GM12878 (cell line): ENCODE measurements at regions of chr1 and their contacts with region 1.

Region 1: GRCh38 chr1:169694304-169695075 is 16.9 kb downstream of the SELL start:
- DNase-seq: no peak
- ATAC-seq: peak; percentile 51
- H3K4me3 ChIP-seq: no peak overlapping the region
- H3K27ac ChIP-seq: peak overlapping the region; percentile 67; the same call in 1 of the 2 replicates
- H3K4me1 ChIP-seq: peaks cover 80% of the 10 kb centered on the region
- H3K27me3 ChIP-seq: no peaks in the 10 kb centered on the region
- CTCF ChIP-seq: peak in 2 of 3 experiments; percentile 10 to 26; a peak in 2 of 6 replicates
- EP300 ChIP-seq: no peak
- POLR2A ChIP-seq: no peak
- RAD21 ChIP-seq: peak; percentile 42; the same call in 1 of the 2 replicates

Region 2: GRCh38 chr1:169586395-169587255 is 107.9 kb before region 1 on chr1 and contains the start of gene F5:
- CTCF ChIA-PET with region 1: interaction called, 5 read pairs
- POLR2A ChIA-PET with region 1: no interaction called
- RAD21 ChIA-PET with region 1: interaction called, 18 read pairs
- SMC1A ChIA-PET with region 1: interaction called, 10 read pairs
- in situ Hi-C with region 1: no loop called
- intact Hi-C with region 1: no loop called
- DNase-seq: no peak
- ATAC-seq: peak; percentile 99
- H3K4me3 ChIP-seq: 0 out of 2 replicates have a peak within 1 kb of the TSS, but pooled peaks have one; percentile 15
- H3K27ac ChIP-seq: no peak within 1 kb of the TSS
- H3K4me1 ChIP-seq: peaks cover 5% of the 10 kb centered on the region; the same call in 1 of the 2 replicates
- H3K27me3 ChIP-seq: no peaks in the 10 kb centered on the region; a peak in 1 of 4 replicates
- CTCF ChIP-seq: peak; percentile 71 to 87 (median 77)
- EP300 ChIP-seq: no peak
- POLR2A ChIP-seq: no peak
- RAD21 ChIP-seq: peak; percentile 52
- polyA plus RNA-seq, gene F5: 0.29 to 0.46 TPM

Region 3: GRCh38 chr1:169595764-169596711 is 98.5 kb before region 1 on chr1:
- CTCF ChIA-PET with region 1: interaction called, 51 read pairs
- POLR2A ChIA-PET with region 1: no interaction called
- RAD21 ChIA-PET with region 1: interaction called, 29 read pairs
- SMC1A ChIA-PET with region 1: interaction called, 102 read pairs
- in situ Hi-C with region 1: no loop called
- intact Hi-C with region 1: no loop called
- DNase-seq: no peak
- ATAC-seq: peak; percentile 79
- H3K4me3 ChIP-seq: no peak overlapping the region
- H3K27ac ChIP-seq: no peak overlapping the region
- H3K4me1 ChIP-seq: peaks cover 12% of the 10 kb centered on the region
- H3K27me3 ChIP-seq: no peaks in the 10 kb centered on the region
- CTCF ChIP-seq: no peak
- EP300 ChIP-seq: no peak
- POLR2A ChIP-seq: no peak
- RAD21 ChIP-seq: no peak

Region 4: GRCh38 chr1:169630006-169630405 is 64.5 kb before region 1 on chr1 and contains the start of gene SELP:
- CTCF ChIA-PET with region 1: no interaction called
- POLR2A ChIA-PET with region 1: no interaction called
- RAD21 ChIA-PET with region 1: no interaction called
- SMC1A ChIA-PET with region 1: no interaction called
- in situ Hi-C with region 1: no loop called
- intact Hi-C with region 1: no loop called
- DNase-seq: no peak
- ATAC-seq: no peak
- H3K4me3 ChIP-seq: no peak within 1 kb of the TSS
- H3K27ac ChIP-seq: no peak within 1 kb of the TSS
- H3K4me1 ChIP-seq: no peaks in the 10 kb centered on the region
- H3K27me3 ChIP-seq: no peaks in the 10 kb centered on the region
- CTCF ChIP-seq: no peak
- EP300 ChIP-seq: no peak
- POLR2A ChIP-seq: no peak
- RAD21 ChIP-seq: no peak
- polyA plus RNA-seq, gene SELP: not detected

Region 5: DNA sequence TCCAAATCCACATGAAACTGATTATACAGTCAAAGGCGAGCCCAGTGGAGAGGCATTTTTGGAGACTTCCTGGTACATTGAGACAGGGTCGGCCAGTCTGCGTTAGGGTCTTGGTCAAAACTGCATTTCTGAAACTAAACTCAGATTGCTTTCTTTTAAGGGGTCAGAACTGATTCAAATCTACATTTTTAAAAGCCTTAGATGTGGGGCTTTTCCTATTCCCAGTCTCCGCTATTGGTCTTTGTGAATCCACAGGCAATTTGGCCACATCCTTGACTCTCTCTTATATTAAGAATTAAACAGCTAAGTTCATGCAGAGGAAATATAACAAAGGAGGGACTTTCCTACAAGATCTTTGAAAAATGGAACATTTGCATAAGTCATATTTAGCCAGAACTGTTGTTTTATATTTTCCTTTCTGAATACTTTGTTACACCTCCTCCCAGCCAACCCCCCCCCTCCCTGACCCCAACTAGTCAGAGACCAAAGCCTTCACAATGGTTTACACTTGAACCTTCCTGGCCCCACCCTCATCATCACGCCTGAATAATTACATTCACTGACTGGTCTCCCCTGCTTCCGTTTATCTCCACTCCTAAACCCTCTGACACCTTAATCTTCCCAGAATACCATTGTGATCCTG is 14.0 kb before region 1 on chr1:
- CTCF ChIA-PET with region 1: interaction called, 125 read pairs
- POLR2A ChIA-PET with region 1: interaction called, 64 read pairs
- RAD21 ChIA-PET with region 1: interaction called, 71 read pairs
- SMC1A ChIA-PET with region 1: interaction called, 176 read pairs
- in situ Hi-C with region 1: no loop called
- intact Hi-C with region 1: loop called (anchors 2 kb)
- DNase-seq: peak; percentile 73
- ATAC-seq: peak; percentile 88
- H3K4me3 ChIP-seq: peak overlapping the region; percentile 37
- H3K27ac ChIP-seq: peak overlapping the region; percentile 76
- H3K4me1 ChIP-seq: peaks cover 49% of the 10 kb centered on the region
- H3K27me3 ChIP-seq: no peaks in the 10 kb centered on the region
- CTCF ChIP-seq: no peak
- EP300 ChIP-seq: no peak
- POLR2A ChIP-seq: no peak
- RAD21 ChIP-seq: no peak

Region 6: DNA sequence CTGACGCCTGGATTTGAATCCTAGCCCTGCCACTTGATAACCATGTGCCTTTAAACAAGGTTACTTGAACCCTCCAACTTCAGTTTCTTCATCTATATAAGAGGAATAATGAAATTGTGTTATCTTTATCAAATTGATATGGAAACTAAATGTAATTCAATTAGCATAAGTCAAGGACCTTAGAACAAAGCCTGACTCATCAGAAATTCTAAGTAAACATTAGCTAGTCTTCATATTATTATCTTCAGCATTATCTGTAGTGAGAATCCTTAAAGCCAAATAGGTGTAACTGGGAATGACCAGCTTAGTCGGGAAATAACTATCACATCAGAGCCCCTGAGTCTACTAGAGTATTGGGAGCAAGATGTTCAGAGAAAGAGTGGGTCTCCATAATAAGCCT is 10.3 kb after region 1 on chr1:
- CTCF ChIA-PET with region 1: interaction called, 30 read pairs
- POLR2A ChIA-PET with region 1: interaction called, 11 read pairs
- RAD21 ChIA-PET with region 1: interaction called, 40 read pairs
- SMC1A ChIA-PET with region 1: interaction called, 114 read pairs
- in situ Hi-C with region 1: no loop called
- intact Hi-C with region 1: no loop called
- DNase-seq: no peak
- ATAC-seq: no peak
- H3K4me3 ChIP-seq: no peak overlapping the region
- H3K27ac ChIP-seq: no peak overlapping the region
- H3K4me1 ChIP-seq: peaks cover 3% of the 10 kb centered on the region; the same call in 1 of the 2 replicates
- H3K27me3 ChIP-seq: no peaks in the 10 kb centered on the region
- CTCF ChIP-seq: no peak
- EP300 ChIP-seq: no peak
- POLR2A ChIP-seq: no peak
- RAD21 ChIP-seq: no peak